ENCODE measurements at regions of chr14 and their contacts with region 1.

Region 1: DNA sequence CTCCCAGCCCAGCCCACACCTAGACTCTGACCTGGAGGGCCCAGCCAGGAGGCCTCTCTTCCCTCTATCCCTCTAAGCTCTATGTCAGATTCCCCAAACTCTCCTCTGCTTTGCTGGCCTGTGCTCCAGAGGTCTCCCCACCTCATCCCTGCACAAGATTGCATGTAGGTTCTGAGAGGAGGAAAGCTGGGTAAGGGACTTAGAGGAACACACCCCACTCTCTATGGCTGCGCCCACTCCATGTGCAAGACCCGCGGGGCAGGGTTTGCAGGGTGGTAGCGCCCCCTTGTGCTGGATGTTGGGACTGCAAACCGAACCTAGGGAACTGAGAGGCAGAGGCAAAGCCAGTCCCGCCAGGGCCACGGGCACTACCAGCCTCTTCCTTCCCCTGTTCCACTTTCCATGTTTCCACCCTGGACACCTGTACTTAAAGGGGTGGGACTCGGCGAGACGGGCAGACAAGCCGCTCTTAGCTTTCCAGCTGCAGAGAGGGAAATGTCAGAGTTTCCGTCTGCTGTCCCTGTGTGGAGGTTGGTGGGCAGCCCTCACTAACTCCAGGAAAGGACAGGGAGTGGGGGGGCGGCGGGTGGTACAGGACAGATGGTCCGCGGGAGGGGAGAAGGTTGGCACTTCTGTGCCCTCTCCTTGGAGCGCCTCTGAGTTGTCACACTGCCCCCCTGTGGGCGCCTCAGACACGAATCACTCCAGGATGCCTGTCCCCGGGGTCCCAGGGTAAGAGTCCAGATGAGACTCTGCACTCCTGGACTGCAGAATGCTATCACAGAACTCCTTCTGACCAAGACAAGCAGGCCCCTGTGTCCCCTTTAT is 16.8 kb downstream of the MMP14 start:
- DNase-seq: peak; percentile 79 to 91 (median 84)
- H3K4me3 ChIP-seq: peak overlapping the region; percentile 90
- H3K4me3 Mint-ChIP-seq: peak overlapping the region; percentile 25 to 87 (median 82)
- H3K27ac ChIP-seq: peak overlapping the region; percentile 67
- H3K27ac Mint-ChIP-seq: peak overlapping the region in 5 of 8 donors; percentile 18 to 95 (median 72)
- H3K4me1 ChIP-seq: peaks cover 15% of the 10 kb centered on the region
- H3K4me1 Mint-ChIP-seq: peaks cover 7 to 19% (median 16%) of the 10 kb centered on the region in 3 donors
- H3K27me3 ChIP-seq: peaks cover 6% of the 10 kb centered on the region
- H3K27me3 Mint-ChIP-seq: peaks cover 6 to 24% of the 10 kb centered on the region in 2 donors

Region 2: DNA sequence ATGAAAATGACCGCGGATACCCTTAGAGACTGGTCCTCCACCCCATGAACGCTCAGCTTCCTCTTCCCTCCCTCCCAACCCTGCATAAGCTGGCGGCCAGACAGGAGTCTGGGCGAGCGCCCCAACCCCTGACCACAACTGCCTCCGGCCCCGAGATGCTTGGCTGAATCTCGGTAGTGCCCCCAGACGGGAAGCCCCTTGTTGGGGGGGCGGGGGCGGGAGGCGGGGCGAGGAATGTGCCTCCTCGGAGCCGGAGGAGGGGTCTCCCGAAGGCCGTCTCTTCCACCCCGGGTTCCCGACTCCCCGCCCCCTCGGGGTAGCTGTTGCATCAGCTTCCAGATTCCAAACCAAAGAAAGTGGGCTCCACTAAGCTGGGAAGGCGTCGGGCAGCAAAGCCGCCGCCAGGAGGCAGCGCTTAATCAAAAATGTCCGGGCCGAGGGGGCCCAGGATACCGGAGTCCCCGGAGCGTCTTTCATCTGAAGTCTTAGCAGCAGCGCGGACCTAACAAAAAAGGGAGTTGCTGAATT is 30.5 kb before region 1 on chr14:
- CTCF ChIA-PET with region 1: interaction called, 149 read pairs
- POLR2A ChIA-PET with region 1: interaction called, 6 read pairs
- DNase-seq: peak; percentile 53 to 81 (median 57)
- H3K4me3 ChIP-seq: peak overlapping the region; percentile 13
- H3K4me3 Mint-ChIP-seq: peak overlapping the region in 6 of 7 donors; percentile 41 to 72 (median 66)
- H3K27ac ChIP-seq: no peak overlapping the region
- H3K27ac Mint-ChIP-seq: peak overlapping the region in 1 of 8 donors; percentile 15
- H3K4me1 ChIP-seq: peaks cover 19% of the 10 kb centered on the region
- H3K4me1 Mint-ChIP-seq: peaks cover 8 to 12% (median 9%) of the 10 kb centered on the region in 3 donors
- H3K27me3 ChIP-seq: no peaks in the 10 kb centered on the region
- H3K27me3 Mint-ChIP-seq: peaks cover 35 to 45% of the 10 kb centered on the region in 2 donors

Region 3: GRCh38 chr14:22829661-22830442 is 23.3 kb before region 1 on chr14 and contains the start of gene MRPL52:
- CTCF ChIA-PET with region 1: interaction called, 149 read pairs
- POLR2A ChIA-PET with region 1: interaction called, 4 read pairs
- DNase-seq: peak; percentile 83 to 95 (median 85)
- H3K4me3 ChIP-seq: peak within 1 kb of the TSS; percentile 95
- H3K4me3 Mint-ChIP-seq: peak within 1 kb of the TSS; percentile 89 to 95 (median 91)
- H3K27ac ChIP-seq: peak within 1 kb of the TSS; percentile 91
- H3K27ac Mint-ChIP-seq: peak within 1 kb of the TSS; percentile 86 to 98 (median 95)
- H3K4me1 ChIP-seq: peaks cover 13% of the 10 kb centered on the region
- H3K4me1 Mint-ChIP-seq: peaks cover 22 to 34% (median 27%) of the 10 kb centered on the region in 3 donors
- H3K27me3 ChIP-seq: no peaks in the 10 kb centered on the region
- H3K27me3 Mint-ChIP-seq: peaks cover 10 to 12% of the 10 kb centered on the region in 2 donors
- total RNA-seq, gene MRPL52: 181 to 185 TPM

Region 4: DNA sequence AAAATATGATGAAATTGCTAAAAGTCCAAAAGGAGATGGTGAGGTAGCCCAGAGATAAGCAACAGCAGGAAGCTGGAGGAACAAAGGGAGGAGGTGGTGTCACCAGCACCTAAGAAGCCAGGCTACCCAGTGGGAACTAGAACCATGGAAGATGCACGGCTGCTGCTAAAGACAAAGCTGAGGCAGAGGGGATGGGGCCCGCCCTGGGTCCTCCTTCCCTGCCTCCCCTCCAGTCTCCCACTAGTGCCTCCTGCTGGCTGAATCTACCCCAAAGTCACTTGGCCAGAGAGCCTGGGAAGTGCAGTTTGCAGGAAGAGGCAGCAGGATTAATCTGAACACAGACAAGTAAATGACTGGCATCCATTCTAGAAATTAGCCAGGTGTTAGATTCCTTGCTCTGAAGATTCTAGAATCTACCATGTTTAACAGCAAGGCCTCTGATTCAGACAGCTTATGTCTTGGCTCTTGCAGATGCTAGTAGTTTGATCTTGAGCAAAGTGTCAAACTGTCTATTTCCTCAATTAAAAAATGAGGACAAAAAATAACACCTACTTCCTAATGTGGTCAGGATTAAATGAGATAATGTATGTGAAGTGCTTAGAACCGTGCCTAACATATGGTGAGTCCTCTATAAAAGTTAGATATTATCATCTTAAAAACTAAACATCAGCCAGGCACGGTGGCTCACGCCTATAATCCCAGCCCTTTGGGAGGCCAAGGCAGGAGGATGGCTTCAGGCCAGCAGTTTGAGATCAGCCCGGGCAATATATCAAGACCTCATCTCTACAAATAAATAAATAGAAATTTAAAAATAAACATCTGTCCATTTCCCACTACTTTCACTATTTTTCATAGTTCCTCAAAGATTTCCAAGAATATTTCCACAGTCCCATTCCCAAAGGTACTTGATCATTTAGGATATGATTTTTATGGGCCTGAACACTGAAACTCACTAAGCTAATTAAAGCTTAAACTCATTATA is 12.6 kb after region 1 on chr14:
- CTCF ChIA-PET with region 1: interaction called, 42 read pairs
- POLR2A ChIA-PET with region 1: interaction called, 7 read pairs
- DNase-seq: no peak
- H3K4me3 ChIP-seq: no peak overlapping the region
- H3K4me3 Mint-ChIP-seq: no peak overlapping the region
- H3K27ac ChIP-seq: no peak overlapping the region
- H3K27ac Mint-ChIP-seq: peak overlapping the region in 1 of 8 donors; percentile 42
- H3K4me1 ChIP-seq: peaks cover 13% of the 10 kb centered on the region
- H3K4me1 Mint-ChIP-seq: peaks cover 4 to 10% (median 9%) of the 10 kb centered on the region in 3 donors
- H3K27me3 ChIP-seq: no peaks in the 10 kb centered on the region
- H3K27me3 Mint-ChIP-seq: peaks cover 9 to 10% of the 10 kb centered on the region in 2 donors

Region 5: DNA sequence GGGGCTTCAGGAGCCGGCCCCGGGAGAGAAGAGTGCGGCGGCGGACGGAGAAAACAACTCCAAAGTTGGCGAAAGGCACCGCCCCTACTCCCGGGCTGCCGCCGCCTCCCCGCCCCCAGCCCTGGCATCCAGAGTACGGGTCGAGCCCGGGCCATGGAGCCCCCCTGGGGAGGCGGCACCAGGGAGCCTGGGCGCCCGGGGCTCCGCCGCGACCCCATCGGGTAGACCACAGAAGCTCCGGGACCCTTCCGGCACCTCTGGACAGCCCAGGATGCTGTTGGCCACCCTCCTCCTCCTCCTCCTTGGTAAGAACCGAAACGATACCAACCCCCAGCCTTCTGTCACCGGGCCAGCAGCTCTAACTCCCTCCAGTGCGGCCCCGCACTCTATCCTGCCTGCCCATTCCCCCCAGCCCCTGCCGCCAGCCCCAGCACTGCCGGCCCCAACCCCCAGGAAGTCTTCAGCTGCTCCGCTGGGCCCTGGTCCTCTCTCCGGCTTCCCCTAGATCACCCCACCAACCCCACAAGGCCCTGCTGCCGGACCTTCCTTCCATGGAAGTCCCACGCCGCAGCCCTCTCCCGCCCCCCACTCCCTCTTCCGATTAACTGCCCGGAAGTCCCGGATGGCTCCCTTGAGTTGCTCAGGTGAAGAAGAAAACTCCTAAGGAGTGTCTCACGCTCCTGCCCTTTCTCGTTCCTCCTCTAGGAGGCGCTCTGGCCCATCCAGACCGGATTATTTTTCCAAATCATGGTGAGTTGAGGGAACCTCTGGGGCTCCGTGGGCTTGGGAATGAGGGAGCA is 19.1 kb after region 1 on chr14:
- CTCF ChIA-PET with region 1: interaction called, 42 read pairs
- POLR2A ChIA-PET with region 1: interaction called, 7 read pairs
- DNase-seq: peak; percentile 60 to 78 (median 67)
- H3K4me3 ChIP-seq: peak overlapping the region; percentile 84
- H3K4me3 Mint-ChIP-seq: peak overlapping the region; percentile 93 to 98 (median 94)
- H3K27ac ChIP-seq: peak overlapping the region; percentile 89
- H3K27ac Mint-ChIP-seq: peak overlapping the region; percentile 64 to 99 (median 98)
- H3K4me1 ChIP-seq: peaks cover 24% of the 10 kb centered on the region
- H3K4me1 Mint-ChIP-seq: peaks cover 30 to 39% (median 33%) of the 10 kb centered on the region in 3 donors
- H3K27me3 ChIP-seq: no peaks in the 10 kb centered on the region
- H3K27me3 Mint-ChIP-seq: no peaks in the 10 kb centered on the region

Region 6: GRCh38 chr14:22900081-22900799 is 47.1 kb after region 1 on chr14:
- CTCF ChIA-PET with region 1: interaction called, 25 read pairs
- POLR2A ChIA-PET with region 1: no interaction called
- DNase-seq: peak in 2 of 5 donors; percentile 49 to 57
- H3K4me3 ChIP-seq: no peak overlapping the region
- H3K4me3 Mint-ChIP-seq: no peak overlapping the region
- H3K27ac ChIP-seq: no peak overlapping the region
- H3K27ac Mint-ChIP-seq: peak overlapping the region in 6 of 8 donors; percentile 0 to 65 (median 26)
- H3K4me1 ChIP-seq: peaks cover 7% of the 10 kb centered on the region
- H3K4me1 Mint-ChIP-seq: peaks cover 5 to 10% (median 5%) of the 10 kb centered on the region in 3 donors
- H3K27me3 ChIP-seq: no peaks in the 10 kb centered on the region
- H3K27me3 Mint-ChIP-seq: no peaks in the 10 kb centered on the region